Activated CD4-positive, alpha-beta T cell treated with anti-CD3 and anti-CD28 coated beads for 36 hours (primary cell): ENCODE measurements at regions of chr5 and their contacts with region 1.

Region 1: GRCh38 chr5:132591145-132591544 is 34.4 kb downstream of the RAD50 start:
- DNase-seq: no peak
- ATAC-seq: no peak
- H3K4me3 Mint-ChIP-seq: no peak overlapping the region
- H3K27ac Mint-ChIP-seq: no peak overlapping the region
- H3K4me1 Mint-ChIP-seq: peaks cover under 1% of the 10 kb centered on the region
- H3K27me3 Mint-ChIP-seq: no peaks in the 10 kb centered on the region

Region 2: DNA sequence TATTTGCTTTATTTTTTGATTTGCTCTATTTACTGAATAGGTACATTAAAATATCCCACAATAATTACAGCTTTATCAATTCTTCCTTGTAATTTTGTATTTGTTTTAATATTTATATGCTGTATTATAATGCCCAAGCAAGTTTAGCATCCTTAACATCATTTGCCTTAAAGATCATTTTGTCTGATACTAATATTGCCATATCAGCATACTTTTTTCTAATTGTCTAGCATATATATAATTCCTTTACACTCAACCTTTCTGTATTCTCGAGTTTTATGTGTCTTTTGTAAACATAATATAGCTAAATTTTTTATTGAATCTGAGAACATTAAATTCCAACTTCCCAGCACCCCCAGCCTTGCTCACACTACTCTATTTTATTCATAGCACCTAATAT is 428.2 kb before region 1 on chr5:
- CTCF ChIA-PET with region 1: no interaction called
- POLR2A ChIA-PET with region 1: no interaction called
- intact Hi-C with region 1: no loop called
- DNase-seq: no peak
- ATAC-seq: no peak
- H3K4me3 Mint-ChIP-seq: no peak overlapping the region
- H3K27ac Mint-ChIP-seq: no peak overlapping the region
- H3K4me1 Mint-ChIP-seq: no peaks in the 10 kb centered on the region
- H3K27me3 Mint-ChIP-seq: peaks cover 2% of the 10 kb centered on the region

Region 3: GRCh38 chr5:132629230-132629944 is 38.2 kb after region 1 on chr5:
- CTCF ChIA-PET with region 1: interaction called, 4 read pairs
- POLR2A ChIA-PET with region 1: interaction called, 12 read pairs
- intact Hi-C with region 1: no loop called
- DNase-seq: no peak
- ATAC-seq: peak; percentile 19
- H3K4me3 Mint-ChIP-seq: no peak overlapping the region
- H3K27ac Mint-ChIP-seq: no peak overlapping the region
- H3K4me1 Mint-ChIP-seq: peaks cover 8% of the 10 kb centered on the region
- H3K27me3 Mint-ChIP-seq: no peaks in the 10 kb centered on the region